ENCODE measurements at regions of chr19 and their contacts with region 1.

Region 1: DNA sequence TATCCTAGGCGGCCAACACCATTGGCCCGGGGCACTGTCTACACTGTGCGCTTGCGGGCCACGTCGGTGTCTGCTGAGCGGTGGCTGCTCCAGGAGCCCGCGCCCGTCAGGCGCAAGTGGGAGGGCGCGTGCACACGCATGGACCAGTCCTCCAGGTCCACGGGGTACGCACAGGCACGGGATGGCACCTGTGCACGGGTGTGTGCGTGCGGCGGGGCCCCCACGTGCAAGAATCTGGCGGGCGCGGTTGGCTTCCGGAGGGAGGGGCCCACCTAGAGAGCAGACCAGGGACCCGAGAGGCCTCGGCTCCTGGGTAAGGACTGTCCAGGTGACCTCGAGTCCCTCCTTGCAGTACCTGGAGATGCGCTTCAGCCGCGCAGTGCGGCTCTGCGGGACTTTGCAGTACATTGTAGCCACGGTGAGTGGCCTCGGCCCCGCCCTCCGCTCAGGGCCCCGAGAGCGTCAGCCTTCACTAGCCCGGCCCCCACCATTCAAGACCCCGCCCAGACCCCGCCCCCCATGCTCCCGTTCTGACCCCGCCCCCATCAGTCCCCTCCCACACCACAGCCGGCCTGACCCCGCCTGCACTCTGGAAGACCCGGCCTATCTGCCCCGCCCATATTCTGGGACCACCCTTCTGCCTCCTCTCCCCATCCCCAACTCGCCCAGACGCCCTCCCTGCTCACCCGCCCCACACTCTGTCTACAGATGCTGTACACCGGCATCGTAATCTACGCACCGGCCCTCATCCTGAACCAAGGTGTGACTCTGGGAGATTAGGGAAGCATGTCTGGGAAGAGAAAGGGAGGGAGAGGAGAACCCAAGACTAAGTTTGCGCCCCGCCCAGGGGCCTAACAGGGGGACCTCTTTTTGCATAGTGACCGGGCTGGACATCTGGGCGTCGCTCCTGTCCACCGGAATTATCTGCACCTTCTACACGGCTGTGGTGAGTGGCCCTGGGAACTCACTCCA is 2.3 kb downstream of the SLC5A5 start:
- ATAC-seq: peak; percentile 54 to 77 (median 68)
- H3K4me3 ChIP-seq: peak overlapping the region in 2 of 5 donors; percentile 9 to 14
- H3K27ac ChIP-seq: no peak overlapping the region
- H3K4me1 ChIP-seq: peaks cover 3 to 12% of the 10 kb centered on the region in 2 donors

Region 2: DNA sequence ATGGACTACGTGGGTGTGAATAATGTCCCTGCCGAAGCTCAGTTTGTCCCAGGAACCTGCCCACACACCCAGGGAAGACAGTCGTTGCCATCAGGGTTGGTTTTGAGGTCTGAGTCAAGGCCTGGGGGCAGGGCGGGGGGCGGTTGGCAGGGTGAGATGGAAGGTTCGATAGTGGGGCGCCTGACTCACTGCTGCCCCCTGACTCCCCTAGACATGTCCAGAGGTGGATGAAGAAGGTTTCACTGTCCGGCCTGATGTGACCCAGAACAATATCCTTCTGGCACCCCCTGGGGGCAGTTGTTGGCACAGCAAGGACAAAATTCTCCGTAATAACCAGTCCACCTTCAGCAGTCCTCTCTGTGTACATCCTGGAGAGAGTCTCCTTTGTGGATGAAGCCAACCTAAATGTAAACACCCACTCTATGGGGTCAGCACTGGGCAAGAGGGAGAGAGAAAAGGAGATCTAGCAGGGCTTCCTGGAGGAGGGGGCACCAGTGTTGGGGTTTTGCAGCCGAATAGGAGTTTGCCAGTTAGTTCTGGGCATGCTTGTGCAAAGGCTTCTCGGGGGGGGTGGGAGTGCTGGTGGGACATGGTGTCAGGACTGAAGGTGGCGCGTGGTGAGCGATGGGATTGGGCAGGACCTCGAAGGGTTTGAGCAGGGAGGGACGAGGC is 98.7 kb before region 1 on chr19:
- in situ Hi-C with region 1: no loop called
- ATAC-seq: peak in 5 of 8 experiments; percentile 4 to 49 (median 29)
- H3K4me3 ChIP-seq: no peak overlapping the region
- H3K27ac ChIP-seq: no peak overlapping the region
- H3K4me1 ChIP-seq: peaks cover 11 to 13% of the 10 kb centered on the region in 2 donors

Region 3: GRCh38 chr19:17929056-17929455 is 55.0 kb after region 1 on chr19:
- in situ Hi-C with region 1: loop called in 1 of 9 experiments (anchors 10 kb)
- ATAC-seq: no peak
- H3K4me3 ChIP-seq: no peak overlapping the region
- H3K27ac ChIP-seq: no peak overlapping the region
- H3K4me1 ChIP-seq: peaks cover 8 to 12% of the 10 kb centered on the region in 2 donors

Measured in motor neuron (in vitro differentiated cells).